Posterior cingulate gyrus (tissue), 11 donors: ENCODE measurements at regions of chr2 and their contacts with region 1.

Region 1: GRCh38 chr2:208415897-208416296 is 9.3 kb downstream of the PTH2R start:
- DNase-seq: no peak

Region 2: GRCh38 chr2:208584378-208584985 is 168.6 kb after region 1 on chr2:
- intact Hi-C with region 1: no loop called
- DNase-seq: no peak

Region 3: DNA sequence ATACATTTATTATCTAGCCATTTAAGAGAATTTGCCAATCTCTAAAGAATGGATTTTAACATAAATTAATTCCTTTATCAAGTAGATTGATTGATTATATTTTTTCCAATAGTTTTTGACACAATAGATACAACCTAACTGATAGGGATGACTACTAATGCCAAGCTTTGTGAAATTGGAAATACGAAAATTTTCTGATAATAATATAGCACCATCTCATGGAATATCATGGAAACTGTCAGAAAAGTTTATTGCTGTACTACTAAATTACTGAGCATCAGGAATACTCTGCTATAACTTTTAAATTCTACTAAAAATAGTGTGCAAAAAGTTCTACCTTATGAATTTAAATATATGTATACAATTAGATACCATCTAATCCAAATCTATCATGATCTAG is 906.1 kb after region 1 on chr2:
- intact Hi-C with region 1: loop called (anchors 10 kb)
- DNase-seq: no peak